ENCODE measurements at regions of chr6 and their contacts with region 1.

Region 1: GRCh38 chr6:34970957-34971356 is 81.9 kb downstream of the ANKS1A start:
- DNase-seq: no peak
- ATAC-seq: no peak
- H3K4me3 ChIP-seq: no peak overlapping the region
- H3K4me3 Mint-ChIP-seq: no peak overlapping the region
- H3K27ac ChIP-seq: no peak overlapping the region
- H3K27ac Mint-ChIP-seq: no peak overlapping the region
- H3K4me1 ChIP-seq: no peaks in the 10 kb centered on the region
- H3K4me1 Mint-ChIP-seq: peaks cover 0 to 8% (median 0%) of the 10 kb centered on the region in 7 donors
- H3K27me3 ChIP-seq: no peaks in the 10 kb centered on the region
- H3K27me3 Mint-ChIP-seq: no peaks in the 10 kb centered on the region

Region 2: DNA sequence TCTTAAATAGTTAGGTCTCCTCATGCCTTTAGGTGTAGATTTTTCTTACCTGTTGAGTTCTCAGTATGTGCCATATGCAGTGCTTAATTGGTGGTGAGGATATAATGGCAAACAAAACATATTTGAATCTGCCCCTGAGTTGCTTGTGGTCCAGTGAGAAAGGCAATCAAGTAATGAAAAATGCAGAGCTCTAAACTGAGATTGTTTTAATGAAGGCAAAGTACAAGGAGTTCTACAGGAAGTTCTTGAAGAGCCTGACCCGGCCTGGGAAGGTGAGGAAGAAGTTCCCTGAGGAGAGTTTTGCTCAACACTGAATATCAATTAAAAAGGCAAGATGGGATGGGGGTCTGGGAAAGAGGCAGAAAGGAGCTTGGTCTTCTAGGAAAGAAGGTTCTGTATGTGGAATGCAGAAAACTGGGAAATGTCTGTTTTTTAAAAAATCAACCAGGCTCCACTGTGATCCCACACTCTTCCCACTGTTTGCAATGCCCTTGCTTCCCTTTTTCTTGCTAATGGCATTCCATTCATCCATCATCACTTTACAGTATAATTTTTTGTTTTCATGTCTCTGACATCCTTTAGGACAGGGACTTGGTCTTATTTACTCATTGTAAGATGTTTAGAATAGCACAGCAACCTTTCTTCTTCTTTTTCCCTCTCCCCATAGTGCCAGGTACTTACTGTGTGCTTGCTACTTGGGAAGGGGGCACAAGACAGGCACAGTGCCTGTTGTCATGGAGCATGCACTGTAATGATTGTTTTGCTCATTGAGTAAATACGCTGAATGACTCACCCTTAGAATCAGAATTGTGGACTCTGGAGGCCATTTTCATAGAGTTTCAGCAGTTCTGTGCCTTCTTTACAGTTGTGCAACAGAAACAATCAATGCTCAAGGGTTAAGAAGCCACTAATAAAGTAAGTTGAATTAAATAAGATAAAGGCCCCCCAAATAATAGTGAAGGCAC is 17.6 kb before region 1 on chr6:
- CTCF ChIA-PET with region 1: interaction called, 4 read pairs
- POLR2A ChIA-PET with region 1: no interaction called
- intact Hi-C with region 1: loop called in 1 of 2 experiments (anchors 2 kb)
- DNase-seq: no peak
- ATAC-seq: no peak
- H3K4me3 ChIP-seq: no peak overlapping the region
- H3K4me3 Mint-ChIP-seq: no peak overlapping the region
- H3K27ac ChIP-seq: no peak overlapping the region
- H3K27ac Mint-ChIP-seq: no peak overlapping the region
- H3K4me1 ChIP-seq: peaks cover 0 to 5% of the 10 kb centered on the region in 2 donors
- H3K4me1 Mint-ChIP-seq: peaks cover 6 to 33% (median 23%) of the 10 kb centered on the region in 7 donors
- H3K27me3 ChIP-seq: no peaks in the 10 kb centered on the region
- H3K27me3 Mint-ChIP-seq: no peaks in the 10 kb centered on the region

Region 3: DNA sequence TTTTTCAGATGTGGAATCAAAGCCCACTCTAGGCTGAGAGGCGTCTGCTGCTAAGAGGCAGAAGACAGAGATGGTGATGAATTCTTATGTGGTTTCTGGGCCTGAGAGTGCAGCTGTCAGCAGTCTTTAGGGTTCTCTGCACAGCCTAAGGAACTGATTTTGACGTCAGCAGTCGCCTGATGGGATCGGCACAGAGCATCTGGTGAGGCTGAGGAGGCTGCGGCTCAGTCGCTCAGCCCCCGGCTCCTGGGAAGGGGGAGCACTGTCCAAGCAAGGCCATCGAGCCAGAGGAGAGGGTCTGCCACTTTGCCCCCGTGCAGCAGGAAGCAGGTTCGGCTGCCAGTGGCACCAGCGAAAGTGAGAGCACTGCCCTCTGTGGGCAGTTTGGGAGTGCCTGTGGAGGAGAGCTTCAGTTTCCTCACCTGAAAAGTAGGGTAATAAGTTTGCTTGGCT is 77.7 kb after region 1 on chr6:
- CTCF ChIA-PET with region 1: no interaction called
- POLR2A ChIA-PET with region 1: no interaction called
- intact Hi-C with region 1: no loop called
- DNase-seq: peak in 6 of 9 donors; percentile 9 to 54 (median 45)
- ATAC-seq: peak; percentile 70
- H3K4me3 ChIP-seq: peak overlapping the region; percentile 34
- H3K4me3 Mint-ChIP-seq: no peak overlapping the region
- H3K27ac ChIP-seq: peak overlapping the region; percentile 48
- H3K27ac Mint-ChIP-seq: no peak overlapping the region
- H3K4me1 ChIP-seq: peaks cover 0 to 18% of the 10 kb centered on the region in 2 donors
- H3K4me1 Mint-ChIP-seq: peaks cover 0 to 17% (median 3%) of the 10 kb centered on the region in 7 donors
- H3K27me3 ChIP-seq: no peaks in the 10 kb centered on the region
- H3K27me3 Mint-ChIP-seq: no peaks in the 10 kb centered on the region